PC-9 (cell line): ENCODE measurements at regions of chr3 and their contacts with region 1.

Region 1: DNA sequence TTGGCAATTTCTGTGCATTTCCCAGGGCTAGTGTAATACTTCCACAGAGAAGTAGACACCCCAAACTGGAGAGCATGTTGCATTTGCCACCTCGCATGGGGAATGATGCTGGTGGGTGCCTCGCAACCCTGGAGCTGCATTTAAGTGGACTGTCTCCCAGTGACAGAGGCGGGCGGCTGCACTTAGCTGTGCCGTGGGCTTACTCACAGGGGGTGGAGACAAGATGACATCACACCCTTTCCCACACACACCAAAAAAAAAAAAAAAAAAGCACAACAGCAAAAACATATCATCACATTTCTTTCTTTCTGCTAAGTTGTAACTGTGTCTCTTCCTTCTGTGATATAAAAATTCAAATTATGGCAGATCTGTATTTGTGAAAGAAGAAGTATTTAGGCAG is at the start of gene ABI3BP:
- DNase-seq: peak in 1 of 2 experiments; percentile 60
- H3K4me3 ChIP-seq: no peak within 1 kb of the TSS
- H3K27ac ChIP-seq: no peak within 1 kb of the TSS
- H3K4me1 ChIP-seq: no peaks in the 10 kb centered on the region
- H3K27me3 ChIP-seq: no peaks in the 10 kb centered on the region
- CTCF ChIP-seq: no peak
- total RNA-seq, gene ABI3BP: 3.4 and 4.2 TPM in 2 replicates

Region 2: DNA sequence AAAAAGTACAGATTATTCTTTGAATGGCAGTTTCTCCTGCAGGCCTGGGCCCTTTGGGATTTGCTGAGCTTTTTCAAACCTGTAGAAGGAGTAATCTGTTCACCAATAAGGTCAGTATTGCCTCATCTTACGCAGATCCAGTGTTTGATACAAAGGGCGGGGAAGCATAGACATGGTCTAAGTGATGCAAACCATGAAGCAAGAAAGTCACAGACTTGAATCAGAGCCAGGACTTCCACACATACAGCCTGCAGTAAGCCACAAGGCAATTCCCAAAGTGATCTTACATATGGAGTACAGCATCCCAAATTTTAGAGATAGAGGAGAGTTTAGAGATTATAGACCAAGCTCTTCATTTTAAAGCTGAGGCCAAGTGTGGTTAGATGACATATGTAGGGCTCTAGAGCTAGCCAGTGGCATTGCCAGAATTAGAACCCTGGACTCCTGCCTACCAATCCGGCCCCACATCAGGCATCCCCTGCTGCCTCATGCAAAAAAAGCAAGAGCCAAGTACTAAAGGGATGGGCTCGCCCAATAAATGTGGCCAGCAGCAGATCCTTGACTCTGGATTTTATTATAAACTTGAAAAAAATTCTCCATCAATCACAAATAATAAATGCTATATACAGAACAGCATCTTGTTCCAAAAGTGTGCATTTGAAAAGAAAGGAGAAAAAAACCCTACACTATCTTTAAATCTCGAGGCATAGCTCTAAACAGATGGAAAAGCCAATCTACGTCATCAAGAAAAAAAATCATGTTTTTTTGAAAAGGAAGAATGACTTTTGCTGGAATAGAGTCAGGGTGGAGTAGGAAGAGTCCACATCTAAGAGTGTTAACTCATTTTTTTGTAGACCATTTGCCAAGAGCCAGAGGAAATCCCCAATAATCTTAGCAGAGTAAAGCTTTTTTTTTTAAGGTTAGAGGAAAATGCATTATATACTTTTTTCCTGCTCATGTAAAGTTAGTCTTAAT is 24.1 kb before region 1 on chr3:
- CTCF ChIA-PET with region 1: no interaction called
- POLR2A ChIA-PET with region 1: interaction called, 11 read pairs
- intact Hi-C with region 1: no loop called
- DNase-seq: no peak
- H3K4me3 ChIP-seq: no peak overlapping the region
- H3K27ac ChIP-seq: no peak overlapping the region
- H3K4me1 ChIP-seq: no peaks in the 10 kb centered on the region
- H3K27me3 ChIP-seq: no peaks in the 10 kb centered on the region
- CTCF ChIP-seq: no peak

Region 3: GRCh38 chr3:101036213-101036618 is 42.9 kb after region 1 on chr3:
- CTCF ChIA-PET with region 1: no interaction called
- POLR2A ChIA-PET with region 1: interaction called, 4 read pairs
- intact Hi-C with region 1: loop called (anchors 1 kb)
- DNase-seq: peak; percentile 91 to 99
- H3K4me3 ChIP-seq: peak overlapping the region; percentile 14; the same call in 1 of the 2 replicates
- H3K27ac ChIP-seq: peak overlapping the region; percentile 92
- H3K4me1 ChIP-seq: peaks cover 35% of the 10 kb centered on the region
- H3K27me3 ChIP-seq: no peaks in the 10 kb centered on the region
- CTCF ChIP-seq: no peak